Tibial artery (tissue), 4 donors: ENCODE measurements at regions of chr7 and their contacts with region 1.

Region 1: DNA sequence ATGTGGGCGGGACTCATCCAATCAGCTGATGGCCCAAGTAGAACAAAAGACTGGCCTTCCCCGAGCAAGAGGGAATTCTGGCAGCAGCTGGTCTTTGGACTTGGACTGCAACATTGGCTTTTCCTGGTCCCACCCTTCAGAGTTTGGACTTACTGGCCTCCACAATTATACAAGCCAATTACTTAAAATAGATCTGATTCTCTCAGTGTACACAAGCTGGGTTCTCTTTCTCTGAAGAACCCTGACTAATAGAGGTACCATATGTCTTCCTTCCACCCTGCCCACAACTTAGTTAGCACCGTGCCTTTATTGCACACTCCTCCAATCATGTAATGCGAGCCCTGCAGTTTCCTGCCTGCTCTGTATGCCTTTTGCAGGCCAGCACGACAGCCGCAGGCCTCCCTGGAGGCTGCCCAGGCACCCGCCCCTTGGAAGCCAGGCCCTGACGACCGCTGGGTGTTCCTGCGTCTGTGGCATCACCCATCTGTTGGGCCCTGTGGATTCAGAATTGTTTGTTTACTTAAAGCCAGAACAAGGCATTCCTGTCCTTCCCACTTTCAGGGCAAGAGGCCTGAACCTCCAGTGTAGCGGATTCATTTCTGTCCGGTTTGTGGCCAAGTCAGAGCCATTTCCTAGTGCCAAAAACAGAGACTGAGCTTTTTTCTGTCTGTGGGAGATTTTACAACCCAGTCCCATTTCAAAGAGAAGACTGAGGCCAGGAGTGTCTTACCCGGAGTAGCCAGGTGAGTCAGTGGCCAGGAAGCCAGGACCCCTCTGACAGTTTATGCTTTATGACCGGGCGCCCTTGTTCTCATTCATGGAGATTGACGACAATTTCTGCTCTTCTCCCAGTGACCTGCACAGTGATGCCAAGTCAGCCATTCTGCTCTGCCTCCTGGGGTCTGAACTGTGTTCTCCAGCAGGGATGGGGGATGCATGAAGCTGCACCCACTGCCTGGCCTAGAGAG is 968 bp upstream of the INMT start:
- DNase-seq: peak; percentile 75 to 93
- H3K4me3 ChIP-seq: peak overlapping the region; percentile 55
- H3K27ac ChIP-seq: peak overlapping the region; percentile 84 to 88
- H3K4me1 ChIP-seq: peaks cover 0 to 58% (median 34%) of the 10 kb centered on the region in 4 donors
- H3K27me3 ChIP-seq: no peaks in the 10 kb centered on the region
- CTCF ChIP-seq: no peak

Region 2: DNA sequence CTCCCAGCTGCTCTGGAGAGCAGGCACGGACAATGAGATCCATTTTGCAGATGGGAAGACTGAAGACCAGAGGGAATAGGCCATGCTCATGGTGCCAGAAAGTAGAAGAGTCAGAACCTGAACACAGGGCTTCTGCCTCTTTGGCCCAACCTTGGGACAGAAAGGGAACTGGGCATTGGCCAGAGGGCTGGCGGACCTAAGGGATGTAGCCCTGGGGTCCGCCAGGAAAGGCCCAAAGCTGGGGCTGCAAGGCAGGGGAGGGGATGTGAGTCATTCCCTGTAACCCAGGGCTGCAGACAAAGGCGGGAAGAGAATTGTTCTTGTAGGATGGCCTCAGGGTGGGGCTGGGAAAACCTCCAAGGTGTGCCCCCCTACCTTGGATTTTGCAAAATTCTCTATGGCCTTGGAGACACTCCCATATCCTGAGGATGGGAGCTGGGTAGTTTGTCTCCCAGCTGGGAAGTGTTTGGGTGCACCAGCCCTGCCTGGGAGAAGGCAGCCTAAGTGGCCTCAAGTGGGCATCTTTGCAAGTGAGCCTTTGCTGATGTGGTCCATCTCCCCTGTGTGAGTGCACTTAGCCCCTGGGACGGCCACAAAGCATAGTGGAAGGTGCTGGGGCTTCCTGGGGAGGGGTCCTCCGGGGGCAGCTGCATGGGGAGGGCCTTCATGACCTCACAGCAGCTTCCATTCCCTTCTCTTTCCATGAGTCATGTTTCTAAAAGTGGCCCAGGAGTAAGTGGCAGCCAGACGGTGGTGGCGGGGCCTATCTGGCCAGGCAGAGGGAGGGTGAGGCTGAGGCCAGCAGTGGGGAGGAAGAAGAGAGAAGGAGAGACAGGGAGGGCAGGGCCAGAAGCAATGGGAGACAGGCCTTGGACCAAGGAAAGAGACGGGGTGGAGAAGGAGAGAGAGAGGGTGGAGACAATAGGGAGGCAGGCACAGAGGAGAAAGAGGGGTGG is 169.9 kb after region 1 on chr7:
- intact Hi-C with region 1: loop called (anchors 5 kb)
- DNase-seq: peak; percentile 70 to 90
- H3K4me3 ChIP-seq: no peak overlapping the region
- H3K27ac ChIP-seq: peak overlapping the region; percentile 87 to 92
- H3K4me1 ChIP-seq: peaks cover 0 to 65% (median 59%) of the 10 kb centered on the region in 4 donors
- H3K27me3 ChIP-seq: no peaks in the 10 kb centered on the region
- CTCF ChIP-seq: no peak